ENCODE measurements at regions of chr17 and their contacts with region 1.

Region 1: DNA sequence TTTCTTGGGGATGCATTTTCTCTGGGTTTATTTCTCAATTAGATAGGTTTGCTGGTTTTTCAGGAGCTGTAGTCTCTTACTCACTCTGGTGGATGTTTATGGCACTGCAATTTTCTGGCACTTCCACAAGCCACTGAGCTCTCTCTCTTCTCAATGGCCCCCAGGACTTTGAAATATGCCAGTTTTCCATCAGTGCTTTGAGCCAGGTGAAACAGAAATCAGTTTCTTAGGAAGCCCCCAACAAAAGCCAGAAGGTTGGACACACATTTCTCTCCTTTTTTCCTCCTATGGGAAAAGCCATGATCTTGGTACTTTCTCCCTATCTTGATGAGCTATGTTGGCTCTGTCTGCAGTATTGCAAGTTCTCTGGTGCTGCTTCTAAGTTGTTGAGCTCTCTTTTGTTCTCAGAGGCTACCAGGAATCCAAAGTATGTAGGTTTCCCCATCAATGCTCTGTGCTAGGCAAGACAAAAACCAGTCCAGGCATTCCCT is 90.7 kb upstream of the SMIM36 start:
- DNase-seq: peak; percentile 37
- ATAC-seq: peak; percentile 58
- H3K4me3 Mint-ChIP-seq: no peak overlapping the region
- H3K27ac Mint-ChIP-seq: no peak overlapping the region
- H3K4me1 Mint-ChIP-seq: no peaks in the 10 kb centered on the region
- H3K27me3 Mint-ChIP-seq: peaks cover 16% of the 10 kb centered on the region

Region 2: GRCh38 chr17:55521186-55521585 is 80.7 kb before region 1 on chr17:
- CTCF ChIA-PET with region 1: interaction called, 158 read pairs
- POLR2A ChIA-PET with region 1: no interaction called
- intact Hi-C with region 1: loop called (anchors 1 kb)
- DNase-seq: no peak
- ATAC-seq: no peak
- H3K4me3 Mint-ChIP-seq: no peak overlapping the region
- H3K27ac Mint-ChIP-seq: no peak overlapping the region
- H3K4me1 Mint-ChIP-seq: peaks cover 5% of the 10 kb centered on the region
- H3K27me3 Mint-ChIP-seq: peaks cover 21% of the 10 kb centered on the region

Region 3: GRCh38 chr17:55641676-55642081 is 39.8 kb after region 1 on chr17:
- CTCF ChIA-PET with region 1: interaction called, 11 read pairs
- POLR2A ChIA-PET with region 1: no interaction called
- intact Hi-C with region 1: no loop called
- DNase-seq: peak; percentile 72
- ATAC-seq: peak; percentile 65
- H3K4me3 Mint-ChIP-seq: no peak overlapping the region
- H3K27ac Mint-ChIP-seq: no peak overlapping the region
- H3K4me1 Mint-ChIP-seq: no peaks in the 10 kb centered on the region
- H3K27me3 Mint-ChIP-seq: peaks cover 10% of the 10 kb centered on the region

Region 4: GRCh38 chr17:55770148-55770870 is 168.4 kb after region 1 on chr17:
- CTCF ChIA-PET with region 1: interaction called, 6 read pairs
- POLR2A ChIA-PET with region 1: no interaction called
- intact Hi-C with region 1: loop called in 1 of 2 experiments (anchors 2 kb)
- DNase-seq: no peak
- ATAC-seq: no peak
- H3K4me3 Mint-ChIP-seq: no peak overlapping the region
- H3K27ac Mint-ChIP-seq: no peak overlapping the region
- H3K4me1 Mint-ChIP-seq: no peaks in the 10 kb centered on the region
- H3K27me3 Mint-ChIP-seq: no peaks in the 10 kb centered on the region

Measured in activated CD4-positive, alpha-beta T cell treated with anti-CD3 and anti-CD28 coated beads for 36 hours (primary cell).